ENCODE measurements at regions of chr6 and their contacts with region 1.

Region 1: GRCh38 chr6:37807656-37808055 is 11.9 kb upstream of the ZFAND3 start:
- DNase-seq: no peak
- ATAC-seq: peak; percentile 41 to 86

Region 2: GRCh38 chr6:37850728-37851285 is 43.2 kb after region 1 on chr6:
- intact Hi-C with region 1: loop called in 1 of 2 experiments (anchors 10 kb)
- DNase-seq: no peak
- ATAC-seq: peak in 1 of 2 donors; percentile 15

Region 3: DNA sequence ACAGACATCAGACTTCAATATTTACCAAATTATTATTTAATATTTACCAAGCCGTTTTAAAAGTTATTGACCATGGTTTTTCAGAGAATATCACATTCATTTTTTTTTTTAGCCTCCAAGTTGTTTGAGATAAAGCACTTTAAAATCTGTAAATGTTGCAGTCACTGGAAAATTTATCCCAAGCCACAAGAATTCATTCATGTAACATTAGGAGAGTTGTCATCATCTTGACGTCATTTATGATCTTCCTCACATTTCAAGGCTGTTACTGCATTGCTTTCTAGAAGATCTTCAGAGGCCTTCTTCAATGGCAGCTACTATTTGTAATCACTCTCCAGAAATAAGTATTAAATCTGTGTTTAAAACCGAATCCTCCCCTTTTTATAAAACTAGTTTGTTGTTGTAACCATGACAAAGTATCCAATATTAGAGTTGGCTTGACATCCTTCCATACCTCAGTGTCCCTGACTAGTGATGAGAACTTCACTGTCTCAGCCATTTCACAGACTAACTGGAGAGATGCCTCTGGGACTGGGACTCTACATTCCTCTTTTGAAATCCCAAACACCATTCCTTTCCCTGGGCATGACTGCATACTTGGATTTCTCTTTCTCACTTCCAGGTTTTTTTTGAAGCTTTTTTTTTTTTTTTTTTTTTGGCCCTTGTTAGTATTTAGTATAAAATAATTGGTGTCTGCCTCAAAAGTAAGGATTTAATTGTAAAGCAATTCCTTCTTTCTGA is 111.9 kb after region 1 on chr6:
- intact Hi-C with region 1: no loop called
- DNase-seq: no peak
- ATAC-seq: no peak